Activated CD4-positive, alpha-beta T cell treated with anti-CD3 and anti-CD28 coated beads, Interleukin-2, amount 10 ng/mL, durations not matched to agents 7 days and 5 days (primary cell): ENCODE measurements at regions of chr3 and their contacts with region 1.

Region 1: GRCh38 chr3:129160891-129161859 is at the start of gene ISY1:
- DNase-seq: peak; percentile 91
- H3K4me3 Mint-ChIP-seq: peak within 1 kb of the TSS; percentile 95
- H3K27ac Mint-ChIP-seq: peak within 1 kb of the TSS; percentile 98
- H3K4me1 Mint-ChIP-seq: peaks cover 37% of the 10 kb centered on the region
- H3K27me3 Mint-ChIP-seq: no peaks in the 10 kb centered on the region
- total RNA-seq, gene ISY1: 56.9 to 60.9 TPM

Region 2: GRCh38 chr3:129045675-129046036 is 115.5 kb before region 1 on chr3:
- CTCF ChIA-PET with region 1: no interaction called
- POLR2A ChIA-PET with region 1: no interaction called
- DNase-seq: peak; percentile 24
- H3K4me3 Mint-ChIP-seq: no peak overlapping the region
- H3K27ac Mint-ChIP-seq: no peak overlapping the region
- H3K4me1 Mint-ChIP-seq: peaks cover 2% of the 10 kb centered on the region
- H3K27me3 Mint-ChIP-seq: peaks cover 35% of the 10 kb centered on the region

Region 3: GRCh38 chr3:129120254-129121004 is 40.7 kb before region 1 on chr3:
- CTCF ChIA-PET with region 1: interaction called, 13 read pairs
- POLR2A ChIA-PET with region 1: no interaction called
- DNase-seq: peak; percentile 97
- H3K4me3 Mint-ChIP-seq: peak overlapping the region; percentile 92
- H3K27ac Mint-ChIP-seq: peak overlapping the region; percentile 98
- H3K4me1 Mint-ChIP-seq: peaks cover 49% of the 10 kb centered on the region
- H3K27me3 Mint-ChIP-seq: no peaks in the 10 kb centered on the region

Region 4: GRCh38 chr3:129183569-129184395 is 22.6 kb after region 1 on chr3 and contains the start of gene CNBP:
- CTCF ChIA-PET with region 1: interaction called, 10 read pairs
- POLR2A ChIA-PET with region 1: no interaction called
- DNase-seq: peak; percentile 91
- H3K4me3 Mint-ChIP-seq: peak within 1 kb of the TSS; percentile 87
- H3K27ac Mint-ChIP-seq: peak within 1 kb of the TSS; percentile 99
- H3K4me1 Mint-ChIP-seq: peaks cover 46% of the 10 kb centered on the region
- H3K27me3 Mint-ChIP-seq: no peaks in the 10 kb centered on the region
- total RNA-seq, gene CNBP: 263 to 270 TPM

Region 5: GRCh38 chr3:129238945-129239706 is 78.0 kb after region 1 on chr3:
- CTCF ChIA-PET with region 1: interaction called, 10 read pairs
- POLR2A ChIA-PET with region 1: no interaction called
- DNase-seq: peak; percentile 61
- H3K4me3 Mint-ChIP-seq: peak overlapping the region; percentile 28
- H3K27ac Mint-ChIP-seq: peak overlapping the region; percentile 93
- H3K4me1 Mint-ChIP-seq: peaks cover 54% of the 10 kb centered on the region
- H3K27me3 Mint-ChIP-seq: no peaks in the 10 kb centered on the region